CD4-positive, alpha-beta memory T cell (primary cell): ENCODE measurements at regions of chr7 and their contacts with region 1.

Region 1: GRCh38 chr7:129376076-129376777 is 58.0 kb upstream of the STRIP2 start:
- DNase-seq: peak; percentile 23 to 61 (median 34)
- H3K4me3 ChIP-seq: no peak overlapping the region
- H3K4me3 Mint-ChIP-seq: no peak overlapping the region
- H3K27ac ChIP-seq: no peak overlapping the region
- H3K27ac Mint-ChIP-seq: no peak overlapping the region
- H3K4me1 ChIP-seq: no peaks in the 10 kb centered on the region
- H3K4me1 Mint-ChIP-seq: peaks cover 7 to 13% (median 10%) of the 10 kb centered on the region in 4 donors
- H3K27me3 ChIP-seq: no peaks in the 10 kb centered on the region
- H3K27me3 Mint-ChIP-seq: no peaks in the 10 kb centered on the region

Region 2: DNA sequence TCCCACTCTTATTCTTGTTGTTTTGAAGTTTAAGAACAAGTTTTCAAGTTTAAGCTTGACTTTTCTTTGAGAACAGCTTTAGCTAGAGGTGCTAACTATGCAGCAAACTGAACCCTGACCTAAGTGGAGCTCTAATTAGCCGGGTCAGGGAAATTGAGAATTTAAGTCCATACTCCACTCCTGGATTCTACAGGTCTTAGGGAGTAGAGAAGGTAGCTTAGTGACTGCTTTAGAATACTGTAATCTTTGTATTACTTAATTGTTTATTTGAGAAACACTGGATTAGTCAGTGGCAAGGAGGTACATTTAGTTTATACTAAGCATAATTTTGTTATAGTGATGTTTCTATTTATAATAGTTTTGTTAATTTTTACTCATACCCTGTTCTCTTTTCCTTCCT is 16.6 kb before region 1 on chr7:
- CTCF ChIA-PET with region 1: interaction called, 51 read pairs
- POLR2A ChIA-PET with region 1: no interaction called
- intact Hi-C with region 1: no loop called
- DNase-seq: no peak
- H3K4me3 ChIP-seq: no peak overlapping the region
- H3K4me3 Mint-ChIP-seq: no peak overlapping the region
- H3K27ac ChIP-seq: no peak overlapping the region
- H3K27ac Mint-ChIP-seq: peak overlapping the region in 1 of 7 donors; percentile 31
- H3K4me1 ChIP-seq: no peaks in the 10 kb centered on the region
- H3K4me1 Mint-ChIP-seq: peaks cover 0 to 4% (median under 1%) of the 10 kb centered on the region in 4 donors
- H3K27me3 ChIP-seq: no peaks in the 10 kb centered on the region
- H3K27me3 Mint-ChIP-seq: no peaks in the 10 kb centered on the region

Region 3: GRCh38 chr7:129389829-129390228 is 13.6 kb after region 1 on chr7:
- CTCF ChIA-PET with region 1: interaction called, 49 read pairs
- POLR2A ChIA-PET with region 1: no interaction called
- intact Hi-C with region 1: no loop called
- DNase-seq: no peak
- H3K4me3 ChIP-seq: no peak overlapping the region
- H3K4me3 Mint-ChIP-seq: no peak overlapping the region
- H3K27ac ChIP-seq: no peak overlapping the region
- H3K27ac Mint-ChIP-seq: no peak overlapping the region
- H3K4me1 ChIP-seq: no peaks in the 10 kb centered on the region
- H3K4me1 Mint-ChIP-seq: peaks cover 0 to 1% (median 0%) of the 10 kb centered on the region in 4 donors
- H3K27me3 ChIP-seq: no peaks in the 10 kb centered on the region
- H3K27me3 Mint-ChIP-seq: no peaks in the 10 kb centered on the region